Thyroid gland (tissue), 4 donors: ENCODE measurements at regions of chr2 and their contacts with region 1.

Region 1: DNA sequence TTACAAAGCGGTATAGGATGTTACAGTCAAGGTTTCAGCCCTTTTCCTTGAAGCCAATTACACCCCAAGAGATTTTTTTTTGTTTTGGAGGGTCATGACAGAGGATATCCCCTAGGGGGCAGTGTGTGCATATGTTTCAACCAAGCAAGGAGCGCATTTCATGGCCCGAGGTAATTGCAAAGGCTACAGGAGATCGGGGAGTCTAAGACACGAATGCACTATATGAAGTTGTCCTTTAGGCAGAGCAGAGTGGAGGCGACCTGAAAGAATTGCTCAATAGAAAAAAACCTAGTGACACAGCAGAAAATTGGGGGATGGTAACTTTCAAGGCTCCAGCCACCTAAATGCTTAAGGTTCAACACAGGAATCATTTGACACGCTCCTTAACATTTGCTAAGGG is 219.8 kb upstream of the PARD3B start:
- DNase-seq: peak; percentile 52 to 66
- H3K4me3 ChIP-seq: no peak overlapping the region
- H3K27ac ChIP-seq: no peak overlapping the region
- H3K4me1 ChIP-seq: no peaks in the 10 kb centered on the region
- H3K27me3 ChIP-seq: no peaks in the 10 kb centered on the region
- CTCF ChIP-seq: peak; percentile 79 to 95 (median 86)
- POLR2A ChIP-seq: no peak

Region 2: GRCh38 chr2:204691911-204692510 is 366.5 kb after region 1 on chr2:
- intact Hi-C with region 1: loop called (anchors 10 kb)
- DNase-seq: peak; percentile 48 to 58
- H3K4me3 ChIP-seq: no peak overlapping the region
- H3K27ac ChIP-seq: no peak overlapping the region
- H3K4me1 ChIP-seq: no peaks in the 10 kb centered on the region
- H3K27me3 ChIP-seq: no peaks in the 10 kb centered on the region
- CTCF ChIP-seq: peak in 5 of 6 experiments; percentile 60 to 79 (median 75)
- POLR2A ChIP-seq: no peak

Region 3: DNA sequence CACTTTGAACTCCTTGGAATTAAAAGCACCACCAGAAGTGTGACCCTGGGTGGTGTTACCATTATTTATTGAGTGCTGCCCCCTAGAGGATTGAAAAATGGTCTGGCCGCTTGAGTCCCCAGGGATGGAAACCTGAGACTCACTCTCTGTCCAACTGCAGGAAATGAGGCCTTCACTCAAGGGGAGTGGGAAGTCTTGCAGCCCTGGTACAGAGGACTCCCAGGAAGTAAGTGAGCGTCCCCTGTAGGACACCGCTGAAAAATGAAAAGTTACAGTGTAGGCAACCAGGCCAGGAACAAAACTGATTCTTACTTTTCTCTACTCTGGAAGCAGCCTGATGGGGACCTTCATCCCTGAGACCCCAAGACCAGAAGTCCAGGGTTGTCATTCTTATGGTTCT is 1354.6 kb after region 1 on chr2:
- intact Hi-C with region 1: loop called (anchors 10 kb)
- DNase-seq: peak; percentile 50 to 55
- H3K4me3 ChIP-seq: no peak overlapping the region
- H3K27ac ChIP-seq: no peak overlapping the region
- H3K4me1 ChIP-seq: peaks cover 25 to 28% of the 10 kb centered on the region in 2 donors
- H3K27me3 ChIP-seq: no peaks in the 10 kb centered on the region
- CTCF ChIP-seq: peak; percentile 41 to 71 (median 54)
- POLR2A ChIP-seq: no peak